ENCODE measurements at regions of chr1 and their contacts with region 1.

Region 1: GRCh38 chr1:64242895-64243756 is 39.7 kb downstream of the UBE2U start:
- DNase-seq: no peak
- ATAC-seq: peak in 3 of 8 donors; percentile 39 to 59 (median 45)
- H3K4me3 ChIP-seq: no peak overlapping the region
- H3K27ac ChIP-seq: no peak overlapping the region
- H3K4me1 ChIP-seq: peaks cover 0 to 23% (median 8%) of the 10 kb centered on the region in 9 donors
- H3K27me3 ChIP-seq: peaks cover 0 to 3% (median 0%) of the 10 kb centered on the region in 7 donors
- CTCF ChIP-seq: peak in 7 of 9 donors; percentile 30 to 62 (median 52)

Region 2: DNA sequence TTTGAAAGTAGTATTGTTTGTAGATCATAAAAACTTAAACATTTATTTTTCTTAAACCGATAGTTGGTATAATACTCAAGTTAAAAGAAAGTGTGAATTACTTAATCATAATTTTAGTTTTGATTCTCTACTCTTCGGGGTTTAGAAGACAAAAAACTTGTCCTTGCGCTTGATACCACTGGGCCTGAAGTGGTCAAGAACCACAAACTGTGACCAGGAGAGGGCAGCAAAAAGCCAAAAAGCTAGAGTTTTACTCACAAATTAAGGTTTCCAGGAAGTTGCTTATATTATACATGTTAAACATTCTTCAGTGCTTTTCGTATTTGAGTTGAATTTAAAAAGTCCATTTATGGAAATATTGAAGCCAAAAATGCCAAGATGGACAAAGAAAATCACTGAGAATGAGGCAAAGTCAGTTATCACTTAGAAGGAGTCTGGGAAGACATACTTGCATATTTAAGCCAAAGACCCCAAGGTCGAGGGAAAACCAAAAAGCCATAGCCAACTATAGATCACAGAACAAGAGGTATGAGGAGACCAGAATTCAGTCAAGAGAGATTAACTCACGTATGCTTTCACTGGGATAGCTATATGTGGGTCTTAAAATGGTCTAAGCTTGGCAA is 685.6 kb before region 1 on chr1:
- intact Hi-C with region 1: loop called in 1 of 10 experiments (anchors 5 kb)
- DNase-seq: no peak
- ATAC-seq: no peak
- H3K4me3 ChIP-seq: no peak overlapping the region
- H3K27ac ChIP-seq: no peak overlapping the region
- H3K4me1 ChIP-seq: no peaks in the 10 kb centered on the region
- H3K27me3 ChIP-seq: no peaks in the 10 kb centered on the region
- CTCF ChIP-seq: peak in 8 of 9 donors; percentile 19 to 57 (median 42)

Region 3: DNA sequence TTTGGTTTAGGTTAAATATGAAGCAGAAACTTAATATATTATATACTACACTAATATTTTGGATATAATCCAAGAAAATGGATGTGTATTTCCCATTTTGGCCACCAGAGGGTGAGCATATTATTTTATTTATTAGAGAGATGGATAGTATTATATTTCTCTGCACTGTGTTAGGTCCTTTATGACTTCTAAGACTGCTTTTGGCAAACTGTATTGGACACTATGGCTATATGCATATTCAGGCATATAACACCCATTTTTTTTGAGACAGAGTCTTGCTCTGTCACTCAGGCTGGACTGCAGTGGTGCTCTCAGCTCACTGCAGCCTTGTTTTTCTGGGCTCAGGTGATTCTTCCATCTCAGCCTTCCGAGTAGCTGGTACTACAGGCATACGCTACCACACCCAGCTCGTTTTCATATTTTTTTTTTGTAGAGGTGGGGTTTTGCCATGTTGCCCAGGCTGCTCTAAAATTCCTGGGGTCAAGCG is 667.7 kb before region 1 on chr1:
- intact Hi-C with region 1: loop called in 3 of 10 experiments (anchors 5 to 10 kb)
- DNase-seq: no peak
- ATAC-seq: peak in 5 of 8 donors; percentile 18 to 49 (median 38)
- H3K4me3 ChIP-seq: no peak overlapping the region
- H3K27ac ChIP-seq: no peak overlapping the region
- H3K4me1 ChIP-seq: peaks cover 0 to 4% (median 0%) of the 10 kb centered on the region in 9 donors
- H3K27me3 ChIP-seq: no peaks in the 10 kb centered on the region
- CTCF ChIP-seq: peak; percentile 73 to 88 (median 78)

Region 4: DNA sequence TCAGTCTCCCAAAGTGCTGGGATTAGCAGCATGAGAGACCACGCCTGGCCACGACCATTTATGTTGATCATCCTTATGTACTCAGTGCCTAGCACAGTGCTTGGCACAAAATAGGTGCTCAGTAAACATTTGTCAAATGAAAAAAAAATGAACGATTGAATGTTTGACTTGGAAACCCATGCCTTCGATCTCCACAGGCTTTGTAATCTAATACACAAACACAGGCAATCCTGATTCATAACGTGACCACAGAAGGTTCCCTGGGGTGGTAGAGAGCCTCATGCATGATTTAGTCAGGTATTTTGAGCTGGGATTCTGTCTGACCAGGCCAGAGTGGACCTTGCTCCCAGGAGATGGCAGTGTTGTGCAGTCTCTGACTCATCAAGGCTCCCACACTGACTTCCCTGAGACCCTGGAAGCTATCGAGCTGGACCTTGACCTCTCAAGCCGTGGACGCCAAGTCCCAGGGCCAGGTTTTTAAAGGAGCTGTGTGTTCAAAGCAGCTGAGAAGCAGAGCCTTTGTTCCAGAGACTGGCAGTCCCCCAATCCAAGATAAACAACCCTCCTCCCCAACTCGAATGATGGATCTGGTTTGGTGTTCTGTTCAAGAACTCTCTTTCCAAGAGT is 568.8 kb before region 1 on chr1:
- intact Hi-C with region 1: loop called in 9 of 10 experiments (anchors 2 to 10 kb)
- DNase-seq: peak; percentile 54 to 76
- ATAC-seq: peak; percentile 86 to 93 (median 90)
- H3K4me3 ChIP-seq: no peak overlapping the region
- H3K27ac ChIP-seq: peak overlapping the region in 3 of 10 donors; percentile 3 to 48 (median 44)
- H3K4me1 ChIP-seq: peaks cover 0 to 15% (median 3%) of the 10 kb centered on the region in 9 donors
- H3K27me3 ChIP-seq: no peaks in the 10 kb centered on the region
- CTCF ChIP-seq: peak; percentile 32 to 79 (median 62)

Region 5: GRCh38 chr1:63773815-63774616 is 469.1 kb before region 1 on chr1 and contains the start of gene ROR1:
- intact Hi-C with region 1: loop called in 4 of 10 experiments (anchors 5 to 10 kb)
- DNase-seq: peak; percentile 86 to 88
- ATAC-seq: peak; percentile 95 to 98 (median 97)
- H3K4me3 ChIP-seq: peak within 1 kb of the TSS; percentile 55 to 90 (median 73)
- H3K27ac ChIP-seq: peak within 1 kb of the TSS; percentile 69 to 96 (median 91)
- H3K4me1 ChIP-seq: peaks cover under 1 to 48% (median 16%) of the 10 kb centered on the region in 9 donors
- H3K27me3 ChIP-seq: peaks cover 0 to 46% (median 0%) of the 10 kb centered on the region in 7 donors
- CTCF ChIP-seq: peak; percentile 42 to 83 (median 63)
- total RNA-seq, gene ROR1: 12.0 to 36.2 (median 19.0) TPM

Region 6: DNA sequence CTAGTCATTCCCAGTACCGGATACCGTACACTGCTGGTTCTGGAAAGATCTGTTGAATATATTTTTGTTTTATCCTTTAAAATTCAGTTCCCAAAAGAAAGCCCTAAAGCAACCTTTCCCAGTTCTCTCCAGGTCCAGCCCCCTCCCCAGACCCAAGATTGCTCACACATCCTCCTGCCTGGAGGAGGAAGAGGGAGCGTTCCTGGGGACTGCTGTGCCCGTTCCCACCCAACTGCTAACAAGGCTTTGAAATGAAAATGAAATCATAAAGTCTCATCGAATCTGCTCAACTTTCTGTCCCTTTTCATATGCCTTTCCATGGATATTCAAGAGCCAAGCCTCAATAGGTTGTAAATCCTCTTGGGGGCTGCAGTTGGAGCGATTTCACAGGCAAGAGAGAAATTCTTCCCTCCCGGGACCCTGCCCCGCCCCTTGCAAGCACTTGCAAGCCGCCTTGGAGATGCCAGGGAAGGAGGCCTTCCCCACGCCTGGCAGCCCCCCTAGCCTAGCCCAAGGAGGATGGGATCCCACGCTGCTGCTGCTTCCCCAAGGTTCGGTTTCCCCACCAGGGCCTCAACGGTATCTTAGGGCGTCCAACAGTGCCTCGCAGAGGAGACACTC is 113.6 kb after region 1 on chr1:
- intact Hi-C with region 1: no loop called
- DNase-seq: no peak
- ATAC-seq: no peak
- H3K4me3 ChIP-seq: no peak overlapping the region
- H3K27ac ChIP-seq: no peak overlapping the region
- H3K4me1 ChIP-seq: peaks cover 0 to 12% (median 0%) of the 10 kb centered on the region in 9 donors
- H3K27me3 ChIP-seq: no peaks in the 10 kb centered on the region
- CTCF ChIP-seq: no peak

Region 7: GRCh38 chr1:64584479-64584878 is 341.4 kb after region 1 on chr1:
- intact Hi-C with region 1: no loop called
- DNase-seq: no peak
- ATAC-seq: no peak
- H3K4me3 ChIP-seq: no peak overlapping the region
- H3K27ac ChIP-seq: no peak overlapping the region
- H3K4me1 ChIP-seq: peaks cover 0 to 12% (median 0%) of the 10 kb centered on the region in 9 donors
- H3K27me3 ChIP-seq: no peaks in the 10 kb centered on the region
- CTCF ChIP-seq: peak in 1 of 9 donors; percentile 30

Measured in heart right ventricle (tissue), 16 donors.